HEK293T (cell line): ENCODE measurements at regions of chr21 and their contacts with region 1.

Region 1: GRCh38 chr21:45130324-45130774 is 56.0 kb downstream of the ADARB1 start:
- DNase-seq: no peak

Region 2: DNA sequence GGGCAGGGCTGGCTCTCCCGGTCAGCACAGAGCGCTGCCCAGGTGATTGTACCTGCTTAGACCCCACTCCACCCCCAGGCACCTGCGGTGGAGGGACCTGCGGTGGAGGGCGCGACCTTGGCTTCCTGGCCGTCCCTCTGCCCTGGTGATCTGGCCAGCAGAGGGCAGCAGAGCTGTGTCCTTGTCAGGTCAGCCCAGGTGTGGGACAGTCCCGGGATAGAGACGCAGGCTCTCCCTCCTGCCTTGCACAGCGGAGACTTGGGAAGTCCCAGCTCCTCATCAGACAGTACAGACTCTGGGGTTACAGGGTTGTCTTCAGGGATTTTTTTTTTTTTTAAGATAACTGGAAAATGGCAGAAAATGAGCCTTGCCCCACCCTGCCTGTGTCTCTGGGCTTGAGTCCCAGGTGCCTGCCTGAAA is 180.6 kb before region 1 on chr21:
- CTCF ChIA-PET with region 1: interaction called, 11 read pairs
- POLR2A ChIA-PET with region 1: no interaction called
- DNase-seq: peak; percentile 86

Region 3: GRCh38 chr21:45098867-45099266 is 31.5 kb before region 1 on chr21:
- CTCF ChIA-PET with region 1: interaction called, 13 read pairs
- POLR2A ChIA-PET with region 1: no interaction called
- DNase-seq: peak; percentile 54

Region 4: GRCh38 chr21:45104560-45104959 is 25.8 kb before region 1 on chr21:
- CTCF ChIA-PET with region 1: interaction called, 18 read pairs
- POLR2A ChIA-PET with region 1: interaction called, 3 read pairs
- DNase-seq: no peak